ENCODE measurements at regions of chr3 and their contacts with region 1.

Region 1: GRCh38 chr3:24963762-24964625 is 464.1 kb upstream of the RARB start:
- DNase-seq: no peak
- ATAC-seq: no peak

Region 2: GRCh38 chr3:24914036-24914435 is 50.0 kb before region 1 on chr3:
- intact Hi-C with region 1: no loop called
- DNase-seq: no peak
- ATAC-seq: no peak

Region 3: DNA sequence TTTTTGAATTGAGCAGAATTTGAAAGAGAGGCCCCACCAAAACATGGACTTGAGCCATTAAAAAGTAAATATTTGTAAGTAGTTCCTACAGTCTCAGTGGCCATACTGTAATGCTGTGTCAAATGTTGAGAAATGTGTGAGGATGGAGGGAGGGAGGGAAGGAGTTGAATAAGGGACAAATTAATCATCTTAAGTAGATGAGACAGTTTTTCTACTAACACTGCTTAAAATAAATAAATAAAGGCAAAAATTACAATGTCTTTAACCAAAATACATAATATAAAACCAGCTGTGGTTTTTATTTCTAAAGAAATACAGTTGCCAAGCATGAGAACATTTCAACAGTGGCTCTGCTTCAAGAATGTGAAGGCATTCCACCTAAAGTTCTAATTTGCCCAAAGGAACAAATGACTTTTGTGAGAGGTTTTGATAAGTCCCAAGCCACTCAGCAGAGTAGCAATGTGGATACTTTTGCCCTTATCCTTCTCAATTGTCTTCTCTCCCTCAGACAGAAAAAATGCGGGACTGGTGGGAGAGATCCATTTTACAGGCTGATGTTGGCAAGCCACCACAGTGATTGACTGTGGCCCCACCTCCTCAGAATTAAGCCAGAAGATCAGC is 37.1 kb after region 1 on chr3:
- intact Hi-C with region 1: loop called in 1 of 2 experiments (anchors 5 kb)
- DNase-seq: no peak
- ATAC-seq: no peak

Region 4: DNA sequence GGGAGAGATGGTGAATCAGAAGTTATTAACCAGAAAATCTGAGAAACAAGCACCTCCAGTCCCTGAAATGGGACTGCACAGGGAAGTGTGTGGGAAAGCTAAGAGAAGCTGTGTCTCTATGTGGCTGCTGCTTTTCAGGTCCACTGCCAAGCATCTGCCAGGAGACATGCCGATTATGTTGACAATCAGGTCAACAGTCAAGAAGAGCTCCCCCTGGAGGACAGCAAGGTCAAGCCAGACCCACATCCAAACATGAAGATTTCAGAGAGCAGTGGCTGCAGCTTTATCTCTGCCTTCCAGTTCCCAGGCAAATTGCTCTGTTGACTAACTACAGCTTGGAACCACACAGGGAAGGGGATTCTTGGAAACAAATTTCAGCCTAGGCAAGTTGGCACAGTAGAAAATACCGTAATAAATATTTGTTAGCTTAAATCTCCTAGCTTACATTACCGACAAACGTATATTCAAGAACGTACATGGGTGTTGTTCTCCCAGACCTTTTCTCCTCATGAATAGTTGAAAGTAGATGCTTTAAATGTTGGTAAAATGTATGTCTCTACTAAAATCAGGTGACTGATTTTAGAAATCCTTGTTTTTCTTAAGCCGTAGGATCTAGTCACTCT is 69.5 kb after region 1 on chr3:
- intact Hi-C with region 1: loop called in 1 of 2 experiments (anchors 10 kb)
- DNase-seq: peak; percentile 52
- ATAC-seq: peak; percentile 77 to 86

Region 5: GRCh38 chr3:25515171-25515570 is 551.2 kb after region 1 on chr3:
- intact Hi-C with region 1: loop called in 1 of 2 experiments (anchors 5 kb)
- DNase-seq: no peak
- ATAC-seq: no peak